Caco-2 (cell line): ENCODE measurements at regions of chr10 and their contacts with region 1.

Region 1: GRCh38 chr10:90935581-90936275 is 14.8 kb upstream of the ANKRD1 start:
- DNase-seq: no peak
- H3K4me3 ChIP-seq: no peak overlapping the region
- H3K4me3 Mint-ChIP-seq: no peak overlapping the region
- H3K27ac Mint-ChIP-seq: peak overlapping the region; percentile 37
- H3K4me1 ChIP-seq: peaks cover 66% of the 10 kb centered on the region
- H3K4me1 Mint-ChIP-seq: peaks cover 55% of the 10 kb centered on the region
- H3K27me3 ChIP-seq: no peaks in the 10 kb centered on the region
- H3K27me3 Mint-ChIP-seq: no peaks in the 10 kb centered on the region
- CTCF ChIP-seq: no peak

Region 2: GRCh38 chr10:90111671-90112070 is 824.1 kb before region 1 on chr10:
- CTCF ChIA-PET with region 1: no interaction called
- POLR2A ChIA-PET with region 1: no interaction called
- intact Hi-C with region 1: no loop called
- DNase-seq: no peak
- H3K4me3 ChIP-seq: no peak overlapping the region
- H3K4me3 Mint-ChIP-seq: no peak overlapping the region
- H3K27ac Mint-ChIP-seq: no peak overlapping the region
- H3K4me1 ChIP-seq: no peaks in the 10 kb centered on the region
- H3K4me1 Mint-ChIP-seq: no peaks in the 10 kb centered on the region
- H3K27me3 ChIP-seq: no peaks in the 10 kb centered on the region
- H3K27me3 Mint-ChIP-seq: no peaks in the 10 kb centered on the region
- CTCF ChIP-seq: no peak

Region 3: GRCh38 chr10:90125456-90126255 is 810.1 kb before region 1 on chr10:
- CTCF ChIA-PET with region 1: no interaction called
- POLR2A ChIA-PET with region 1: no interaction called
- intact Hi-C with region 1: no loop called
- DNase-seq: no peak
- H3K4me3 ChIP-seq: no peak overlapping the region
- H3K4me3 Mint-ChIP-seq: no peak overlapping the region
- H3K27ac Mint-ChIP-seq: no peak overlapping the region
- H3K4me1 ChIP-seq: no peaks in the 10 kb centered on the region
- H3K4me1 Mint-ChIP-seq: no peaks in the 10 kb centered on the region
- H3K27me3 ChIP-seq: no peaks in the 10 kb centered on the region
- H3K27me3 Mint-ChIP-seq: peaks cover 3% of the 10 kb centered on the region
- CTCF ChIP-seq: no peak

Region 4: DNA sequence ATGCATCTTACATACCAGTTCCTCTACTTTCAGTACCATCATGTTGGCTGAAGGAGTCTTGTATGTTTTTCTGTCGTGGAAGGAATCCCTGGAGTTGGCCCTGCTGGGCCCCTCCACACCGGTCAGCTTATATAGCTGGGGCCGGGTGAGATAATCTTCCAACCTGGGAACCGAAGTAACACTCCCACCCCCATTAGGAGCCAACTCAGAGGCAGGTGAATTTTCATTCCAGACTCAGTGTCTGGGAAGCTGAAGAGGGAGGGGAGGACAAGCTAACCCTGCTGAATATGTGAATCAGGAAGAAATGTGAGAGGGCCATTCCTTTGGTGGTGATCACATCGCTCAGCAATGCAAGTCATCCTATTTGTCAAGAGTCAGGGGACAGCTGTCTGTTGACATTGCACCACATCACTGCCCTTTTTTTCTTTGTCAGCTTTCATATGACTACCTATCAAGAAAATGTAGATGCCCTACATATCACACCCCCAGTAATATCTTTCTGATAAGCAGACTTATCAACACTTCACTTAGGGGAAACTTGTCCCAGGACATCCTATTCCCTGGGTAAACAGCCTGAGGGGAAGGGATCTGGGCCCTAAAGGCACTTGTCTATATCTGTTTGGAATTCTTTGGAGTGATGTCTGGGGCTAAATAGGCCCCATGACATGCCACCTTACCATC is 14.6 kb before region 1 on chr10 and contains the start of gene ANKRD1:
- CTCF ChIA-PET with region 1: interaction called, 5 read pairs
- POLR2A ChIA-PET with region 1: interaction called, 62 read pairs
- intact Hi-C with region 1: loop called (anchors 1 kb)
- DNase-seq: peak; percentile 91 to 96
- H3K4me3 ChIP-seq: peak within 1 kb of the TSS; percentile 21
- H3K4me3 Mint-ChIP-seq: peak within 1 kb of the TSS; percentile 95
- H3K27ac Mint-ChIP-seq: peak within 1 kb of the TSS; percentile 96
- H3K4me1 ChIP-seq: peaks cover 24% of the 10 kb centered on the region
- H3K4me1 Mint-ChIP-seq: peaks cover 29% of the 10 kb centered on the region
- H3K27me3 ChIP-seq: no peaks in the 10 kb centered on the region
- H3K27me3 Mint-ChIP-seq: no peaks in the 10 kb centered on the region
- CTCF ChIP-seq: no peak
- total RNA-seq, gene ANKRD1: 75.7 and 97.4 TPM in 2 replicates

Region 5: DNA sequence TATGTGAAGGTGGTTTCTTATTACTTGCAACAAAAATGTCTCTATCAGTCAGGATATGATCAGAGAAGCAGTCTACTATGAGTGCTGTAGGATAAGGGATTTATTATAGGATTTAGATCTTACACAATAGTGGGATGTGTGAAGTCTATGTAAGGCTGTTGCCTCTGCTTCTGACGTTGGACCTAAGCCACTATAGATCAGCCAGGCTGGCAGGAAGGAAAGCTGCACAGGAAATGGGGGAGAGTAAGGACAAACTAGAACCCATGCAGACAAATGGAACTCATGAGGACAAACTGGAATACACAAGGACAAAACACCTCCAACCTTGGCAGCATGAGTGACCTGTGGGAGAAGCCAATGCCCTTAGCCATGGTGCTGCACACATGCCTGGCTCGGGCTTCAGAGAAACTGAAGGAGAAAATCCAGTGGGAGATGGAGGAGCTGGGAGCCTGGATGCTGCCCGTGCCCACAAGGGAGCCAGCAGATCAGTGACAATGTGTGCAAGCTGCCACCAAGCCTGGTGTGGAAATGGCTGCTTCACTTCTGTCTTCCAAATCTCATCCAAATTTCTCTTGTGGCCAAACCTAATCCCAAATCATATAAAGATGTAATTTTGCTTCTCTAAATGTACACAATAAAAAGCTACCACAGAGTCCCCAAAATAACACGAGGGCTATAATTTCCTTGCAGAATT is 137.7 kb after region 1 on chr10:
- CTCF ChIA-PET with region 1: no interaction called
- POLR2A ChIA-PET with region 1: no interaction called
- intact Hi-C with region 1: no loop called
- DNase-seq: no peak
- H3K4me3 ChIP-seq: no peak overlapping the region
- H3K4me3 Mint-ChIP-seq: no peak overlapping the region
- H3K27ac Mint-ChIP-seq: no peak overlapping the region
- H3K4me1 ChIP-seq: no peaks in the 10 kb centered on the region
- H3K4me1 Mint-ChIP-seq: no peaks in the 10 kb centered on the region
- H3K27me3 ChIP-seq: no peaks in the 10 kb centered on the region; the same call in none of the 2 replicates
- H3K27me3 Mint-ChIP-seq: peaks cover 25% of the 10 kb centered on the region
- CTCF ChIP-seq: no peak